OCI-LY7 (cell line): ENCODE measurements at regions of chr2 and their contacts with region 1.

Region 1: GRCh38 chr2:215949991-215950404 is 63.4 kb downstream of the MREG start:
- DNase-seq: peak; percentile 57
- H3K4me3 ChIP-seq: no peak overlapping the region
- H3K27ac ChIP-seq: no peak overlapping the region
- H3K4me1 ChIP-seq: no peaks in the 10 kb centered on the region
- CTCF ChIP-seq: peak; percentile 84

Region 2: GRCh38 chr2:215338883-215339679 is 610.9 kb before region 1 on chr2:
- CTCF ChIA-PET with region 1: no interaction called
- POLR2A ChIA-PET with region 1: no interaction called
- intact Hi-C with region 1: no loop called
- DNase-seq: no peak
- H3K4me3 ChIP-seq: no peak overlapping the region
- H3K27ac ChIP-seq: no peak overlapping the region
- H3K4me1 ChIP-seq: no peaks in the 10 kb centered on the region
- CTCF ChIP-seq: no peak

Region 3: GRCh38 chr2:215973954-215974702 is 24.1 kb after region 1 on chr2:
- CTCF ChIA-PET with region 1: no interaction called
- POLR2A ChIA-PET with region 1: no interaction called
- intact Hi-C with region 1: no loop called
- DNase-seq: no peak
- H3K4me3 ChIP-seq: no peak overlapping the region
- H3K27ac ChIP-seq: no peak overlapping the region
- H3K4me1 ChIP-seq: no peaks in the 10 kb centered on the region
- CTCF ChIP-seq: no peak

Region 4: GRCh38 chr2:216023055-216023648 is 73.2 kb after region 1 on chr2:
- CTCF ChIA-PET with region 1: no interaction called
- POLR2A ChIA-PET with region 1: interaction called, 4 read pairs
- intact Hi-C with region 1: loop called (anchors 2 kb)
- DNase-seq: peak; percentile 58
- H3K4me3 ChIP-seq: no peak overlapping the region
- H3K27ac ChIP-seq: no peak overlapping the region
- H3K4me1 ChIP-seq: peaks cover 7% of the 10 kb centered on the region
- CTCF ChIP-seq: peak; percentile 90

Region 5: GRCh38 chr2:216215658-216216390 is 265.8 kb after region 1 on chr2:
- CTCF ChIA-PET with region 1: no interaction called
- POLR2A ChIA-PET with region 1: no interaction called
- intact Hi-C with region 1: no loop called
- DNase-seq: peak; percentile 45
- H3K4me3 ChIP-seq: no peak overlapping the region
- H3K27ac ChIP-seq: no peak overlapping the region
- H3K4me1 ChIP-seq: peaks cover 17% of the 10 kb centered on the region
- CTCF ChIP-seq: peak; percentile 72